ENCODE measurements at regions of chr1 and their contacts with region 1.

Region 1: DNA sequence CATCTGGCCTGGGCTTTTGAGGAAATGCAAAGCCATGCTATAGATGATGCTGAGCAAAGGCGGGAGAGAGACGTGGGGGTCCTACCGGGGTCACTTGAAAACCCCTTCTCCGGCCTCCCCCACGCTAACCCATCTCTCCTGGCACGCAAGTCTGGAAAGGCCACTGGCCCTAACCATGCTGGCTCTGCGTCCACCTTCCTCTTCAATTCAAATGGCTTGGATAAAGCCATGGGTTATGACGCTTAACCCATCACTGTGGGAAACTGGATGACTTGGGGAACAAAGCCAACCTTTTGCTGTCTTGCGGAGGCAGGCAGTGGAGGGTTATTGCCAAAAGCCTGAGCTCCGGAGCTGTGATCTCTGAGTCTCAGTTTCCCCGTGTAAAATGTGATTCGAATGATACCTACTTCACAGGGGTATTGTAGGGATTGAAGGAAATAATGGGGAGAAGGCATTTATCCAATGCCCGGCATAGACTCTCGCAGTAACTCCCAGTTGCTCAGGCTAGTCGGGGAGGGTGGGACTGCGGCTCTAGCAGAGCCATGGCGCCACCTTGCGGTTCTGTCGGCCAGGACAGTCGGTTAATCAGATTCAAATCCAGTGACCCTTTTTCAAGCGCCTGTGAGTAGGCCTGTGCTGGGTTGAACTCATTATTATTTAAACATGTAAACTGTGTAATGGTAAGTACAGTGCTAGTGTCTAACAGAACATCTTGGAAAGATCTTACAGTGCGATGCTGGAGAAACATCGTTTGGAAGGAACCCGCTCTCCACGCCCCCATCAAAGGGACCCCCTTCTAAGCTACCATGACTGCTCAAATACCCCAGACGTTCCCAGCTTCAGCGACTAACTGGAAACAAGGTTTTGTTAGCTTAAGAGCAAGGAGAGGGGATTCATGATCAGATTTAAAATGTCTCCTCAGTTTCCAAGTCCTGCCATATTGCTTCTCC is 20.3 kb downstream of the NEK2 start:
- H3K4me3 ChIP-seq: no peak overlapping the region
- H3K27ac ChIP-seq: no peak overlapping the region
- H3K4me1 ChIP-seq: 0 out of 2 replicates have a peak, but pooled peaks cover 4% of the 10 kb centered on the region
- CTCF ChIP-seq: peak; percentile 80

Region 2: GRCh38 chr1:211578640-211579433 is 76.3 kb before region 1 on chr1 and contains the start of gene SLC30A1:
- CTCF ChIA-PET with region 1: interaction called, 14 read pairs
- POLR2A ChIA-PET with region 1: interaction called, 15 read pairs
- H3K4me3 ChIP-seq: peak within 1 kb of the TSS; percentile 68
- H3K27ac ChIP-seq: peak within 1 kb of the TSS; percentile 91
- H3K4me1 ChIP-seq: peaks cover 3% of the 10 kb centered on the region
- CTCF ChIP-seq: no peak

Region 3: GRCh38 chr1:211606914-211607755 is 48.0 kb before region 1 on chr1:
- CTCF ChIA-PET with region 1: interaction called, 10 read pairs
- POLR2A ChIA-PET with region 1: no interaction called
- H3K4me3 ChIP-seq: no peak overlapping the region
- H3K27ac ChIP-seq: no peak overlapping the region
- H3K4me1 ChIP-seq: no peaks in the 10 kb centered on the region
- CTCF ChIP-seq: no peak

Region 4: DNA sequence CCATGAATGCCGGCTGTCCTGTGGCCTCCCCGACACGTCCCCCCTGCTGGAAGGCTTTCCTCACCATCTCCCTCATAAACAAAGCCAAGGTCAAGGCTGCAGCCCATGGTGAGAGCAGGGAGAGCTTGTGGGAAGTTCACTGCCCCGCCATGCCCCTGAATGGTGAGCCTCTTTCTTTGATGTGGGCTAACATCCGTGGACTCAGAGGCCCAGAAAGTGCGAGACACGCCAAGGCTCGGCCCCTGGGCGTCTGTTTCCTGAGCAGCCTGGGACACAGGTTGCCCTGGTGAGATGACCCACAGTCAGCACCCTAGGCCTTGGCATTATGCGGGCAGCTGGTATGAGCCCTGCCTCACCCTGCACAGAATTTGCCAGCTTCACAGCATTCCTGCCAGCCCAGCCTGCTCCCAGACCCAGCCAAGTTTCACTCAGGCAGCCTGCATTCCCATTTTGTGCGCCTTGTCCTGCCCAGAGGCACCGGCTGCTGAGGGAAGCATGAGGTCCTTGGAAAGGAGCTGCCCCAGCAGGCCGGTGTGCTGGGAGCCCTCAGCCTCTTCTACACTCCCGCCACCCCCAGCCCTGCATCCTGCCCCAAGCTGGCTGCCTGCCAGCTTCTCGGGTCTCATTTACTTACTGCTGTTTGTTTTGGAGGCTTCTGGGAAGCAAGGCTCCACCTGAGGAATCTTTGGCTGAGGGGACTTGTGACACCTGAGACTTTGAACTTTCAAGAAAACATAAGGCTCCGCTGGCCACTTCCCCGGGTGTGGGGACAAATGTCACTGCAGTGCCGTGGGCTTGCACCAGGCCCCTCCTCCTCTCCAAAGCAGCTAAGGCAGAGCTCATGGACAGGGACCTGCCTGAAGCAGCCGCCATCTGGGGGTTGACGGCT is 11.5 kb before region 1 on chr1:
- CTCF ChIA-PET with region 1: interaction called, 17 read pairs
- POLR2A ChIA-PET with region 1: interaction called, 4 read pairs
- H3K4me3 ChIP-seq: no peak overlapping the region
- H3K27ac ChIP-seq: no peak overlapping the region; the same call in 1 of the 2 replicates
- H3K4me1 ChIP-seq: peaks cover 8% of the 10 kb centered on the region
- CTCF ChIP-seq: no peak

Region 5: GRCh38 chr1:211859405-211859804 is 204.3 kb after region 1 on chr1:
- CTCF ChIA-PET with region 1: no interaction called
- POLR2A ChIA-PET with region 1: no interaction called
- H3K4me3 ChIP-seq: no peak overlapping the region
- H3K27ac ChIP-seq: no peak overlapping the region
- H3K4me1 ChIP-seq: no peaks in the 10 kb centered on the region
- CTCF ChIP-seq: no peak

Measured in HEK293 (cell line).